PC-9 (cell line): ENCODE measurements at regions of chr2 and their contacts with region 1.

Region 1: GRCh38 chr2:96816128-96816835 is at the start of gene CNNM3:
- DNase-seq: peak; percentile 87 to 99
- H3K4me3 ChIP-seq: peak within 1 kb of the TSS; percentile 87
- H3K27ac ChIP-seq: peak within 1 kb of the TSS; percentile 7; the same call in 1 of the 2 replicates
- H3K4me1 ChIP-seq: peaks cover 26% of the 10 kb centered on the region
- H3K27me3 ChIP-seq: no peaks in the 10 kb centered on the region
- CTCF ChIP-seq: peak; percentile 74
- total RNA-seq, gene CNNM3: 28.7 and 28.8 TPM in 2 replicates

Region 2: DNA sequence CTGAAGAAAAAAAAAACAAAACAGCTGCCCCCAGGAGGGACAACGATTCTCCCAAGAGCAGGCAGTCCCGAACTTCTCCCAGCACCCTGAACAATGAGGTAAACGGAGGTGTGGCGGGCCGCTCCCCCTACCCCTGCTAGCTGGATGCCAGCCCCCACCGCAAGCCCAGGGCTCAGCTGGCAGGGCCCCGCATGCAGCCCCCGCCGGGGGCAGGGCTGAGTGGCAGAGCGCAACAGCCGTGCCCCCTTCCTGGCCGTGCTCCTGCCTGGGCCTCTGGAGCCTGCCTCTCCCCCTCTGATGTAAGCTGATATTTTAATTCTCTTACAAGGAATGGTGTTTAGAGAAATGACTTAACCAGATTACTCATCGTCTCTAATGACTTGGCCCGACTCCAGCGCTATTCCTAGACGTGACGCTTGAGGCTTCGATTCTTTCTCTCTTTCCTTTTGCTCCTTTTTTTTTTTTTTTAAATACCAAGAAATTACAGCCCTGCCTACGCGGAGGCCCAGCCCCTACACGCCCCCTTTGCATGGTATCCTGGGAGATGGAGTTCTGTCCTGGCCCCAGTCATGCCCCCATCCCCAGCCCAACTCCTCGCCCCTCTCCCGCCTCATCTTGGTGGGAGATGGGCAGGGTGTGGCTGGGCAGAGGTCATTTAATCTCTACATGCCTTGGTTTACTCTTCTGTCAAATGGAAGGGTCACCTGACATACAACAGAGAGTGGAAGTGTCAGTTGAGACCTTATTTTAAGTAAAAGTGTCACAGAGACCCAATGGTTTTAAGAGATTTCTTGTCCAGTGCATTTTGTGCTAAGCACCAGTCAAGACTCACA is 284.2 kb before region 1 on chr2:
- CTCF ChIA-PET with region 1: interaction called, 3 read pairs
- POLR2A ChIA-PET with region 1: no interaction called
- intact Hi-C with region 1: loop called (anchors 5 kb)
- DNase-seq: peak; percentile 92 to 99
- H3K4me3 ChIP-seq: peak overlapping the region; percentile 51
- H3K27ac ChIP-seq: 0 out of 2 replicates have a peak overlapping the region, but pooled peaks have one; percentile 59
- H3K4me1 ChIP-seq: peaks cover 36% of the 10 kb centered on the region
- H3K27me3 ChIP-seq: no peaks in the 10 kb centered on the region
- CTCF ChIP-seq: no peak

Region 3: DNA sequence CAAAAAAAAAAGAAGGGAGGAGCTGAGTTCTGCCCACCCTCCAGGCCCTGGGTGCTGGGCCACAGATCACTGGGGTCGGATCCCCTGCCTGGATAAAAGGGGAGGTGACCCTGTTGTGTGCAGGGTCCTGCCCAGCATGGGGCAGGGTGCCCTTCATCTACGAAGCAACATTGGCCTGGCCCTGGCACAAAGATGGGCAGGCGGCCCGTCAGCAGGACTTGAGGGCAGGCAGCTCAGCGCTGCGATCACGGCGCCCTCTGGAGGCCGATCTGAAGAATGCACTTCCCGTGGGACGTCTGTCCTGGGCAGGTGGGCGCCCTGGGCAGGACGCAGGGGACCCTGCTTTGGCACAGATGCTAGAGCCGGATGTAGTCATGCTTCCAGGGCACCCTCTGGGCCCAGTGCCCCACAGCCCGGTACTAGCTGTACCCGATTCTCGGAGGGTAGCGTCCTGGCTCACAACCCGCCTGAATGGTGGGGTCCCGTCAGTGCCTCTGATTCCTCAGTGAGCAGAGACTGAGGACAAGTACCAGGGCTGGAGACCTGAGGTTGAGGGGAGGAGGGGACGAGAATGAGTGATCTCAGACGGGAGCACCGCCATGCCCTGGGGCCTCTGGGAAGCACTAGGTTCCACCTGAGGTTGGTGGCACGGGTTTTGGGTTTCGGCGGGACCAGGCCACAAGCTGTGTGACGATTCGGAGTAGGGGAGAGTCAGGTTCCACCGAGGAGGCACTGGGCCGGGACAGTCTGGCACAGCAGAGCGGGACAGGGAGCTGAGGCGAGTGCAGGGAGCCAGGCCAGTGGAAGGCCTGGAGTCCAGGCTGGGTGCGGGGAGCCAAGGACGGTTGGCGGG is 261.8 kb before region 1 on chr2:
- CTCF ChIA-PET with region 1: interaction called, 5 read pairs
- POLR2A ChIA-PET with region 1: no interaction called
- intact Hi-C with region 1: loop called (anchors 5 kb)
- DNase-seq: peak; percentile 55 to 67
- H3K4me3 ChIP-seq: no peak overlapping the region
- H3K27ac ChIP-seq: no peak overlapping the region
- H3K4me1 ChIP-seq: peaks cover 30% of the 10 kb centered on the region
- H3K27me3 ChIP-seq: no peaks in the 10 kb centered on the region
- CTCF ChIP-seq: peak; percentile 99

Region 4: GRCh38 chr2:96669665-96670091 is 146.6 kb before region 1 on chr2:
- CTCF ChIA-PET with region 1: no interaction called
- POLR2A ChIA-PET with region 1: no interaction called
- intact Hi-C with region 1: no loop called
- DNase-seq: no peak
- H3K4me3 ChIP-seq: no peak overlapping the region
- H3K27ac ChIP-seq: no peak overlapping the region
- H3K4me1 ChIP-seq: peaks cover 13% of the 10 kb centered on the region
- H3K27me3 ChIP-seq: no peaks in the 10 kb centered on the region
- CTCF ChIP-seq: no peak

Region 5: DNA sequence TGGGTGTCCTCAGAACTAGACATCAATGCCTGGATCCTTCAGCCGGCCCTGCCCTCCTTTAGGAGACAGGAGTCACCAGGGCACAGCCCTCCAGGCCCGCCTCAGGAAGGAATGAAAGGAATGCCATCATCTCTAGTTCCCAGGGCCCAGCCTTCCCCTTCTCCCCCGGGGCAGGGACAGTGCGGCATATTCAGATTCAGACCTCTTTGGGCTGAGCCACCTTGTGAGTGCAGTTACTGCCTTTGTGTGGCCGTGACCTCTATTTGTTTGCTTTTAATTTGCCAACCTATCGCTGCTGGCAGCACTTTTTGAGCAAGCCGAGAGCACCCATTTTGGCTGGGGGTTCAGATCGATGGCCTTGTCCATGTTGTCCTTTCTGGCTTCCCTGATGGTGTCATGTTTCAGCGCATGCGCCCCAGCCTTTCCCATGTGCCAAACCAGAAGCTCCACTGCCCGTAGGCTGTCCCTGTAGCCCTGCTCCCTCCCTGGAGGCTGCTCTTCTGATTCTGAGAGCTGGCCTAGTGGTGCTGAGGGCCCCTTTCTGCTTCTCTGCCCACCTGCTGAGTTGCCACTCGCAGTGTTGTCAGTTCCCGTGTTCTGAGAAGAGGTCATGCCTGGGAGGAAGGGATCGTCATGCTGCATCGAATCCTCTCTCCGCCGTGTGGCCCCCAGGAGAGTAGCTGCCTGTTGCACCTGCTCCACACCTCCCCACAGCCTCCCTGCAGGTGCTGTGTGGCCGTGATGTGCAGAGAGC is 16.6 kb after region 1 on chr2:
- CTCF ChIA-PET with region 1: no interaction called
- POLR2A ChIA-PET with region 1: no interaction called
- intact Hi-C with region 1: loop called (anchors 1 kb)
- DNase-seq: peak; percentile 90 to 94
- H3K4me3 ChIP-seq: peak overlapping the region; percentile 30; the same call in 1 of the 2 replicates
- H3K27ac ChIP-seq: peak overlapping the region; percentile 86
- H3K4me1 ChIP-seq: peaks cover 25% of the 10 kb centered on the region
- H3K27me3 ChIP-seq: no peaks in the 10 kb centered on the region
- CTCF ChIP-seq: no peak

Region 6: GRCh38 chr2:96960153-96960961 is 144.1 kb after region 1 on chr2:
- CTCF ChIA-PET with region 1: no interaction called
- POLR2A ChIA-PET with region 1: no interaction called
- intact Hi-C with region 1: loop called (anchors 1 kb)
- DNase-seq: peak; percentile 78 to 91
- H3K4me3 ChIP-seq: no peak overlapping the region
- H3K27ac ChIP-seq: no peak overlapping the region
- H3K4me1 ChIP-seq: no peaks in the 10 kb centered on the region
- H3K27me3 ChIP-seq: no peaks in the 10 kb centered on the region
- CTCF ChIP-seq: peak; percentile 99